ENCODE measurements at regions of chr4 and their contacts with region 1.

Region 1: GRCh38 chr4:26410385-26411293 is 79.6 kb downstream of the CCKAR start:
- ATAC-seq: peak in 6 of 8 experiments; percentile 51 to 75 (median 66)
- H3K4me3 ChIP-seq: no peak overlapping the region
- H3K27ac ChIP-seq: no peak overlapping the region
- H3K4me1 ChIP-seq: no peaks in the 10 kb centered on the region

Region 2: GRCh38 chr4:26028793-26029567 is 381.7 kb before region 1 on chr4:
- in situ Hi-C with region 1: loop called in 2 of 9 experiments (anchors 25 kb)
- ATAC-seq: peak; percentile 92 to 99 (median 98)
- H3K4me3 ChIP-seq: no peak overlapping the region
- H3K27ac ChIP-seq: no peak overlapping the region
- H3K4me1 ChIP-seq: peaks cover 17 to 29% of the 10 kb centered on the region in 2 donors

Region 3: GRCh38 chr4:26061248-26061986 is 349.2 kb before region 1 on chr4:
- in situ Hi-C with region 1: loop called in 1 of 9 experiments (anchors 25 kb)
- ATAC-seq: peak in 3 of 8 experiments; percentile 71 to 81 (median 75)
- H3K4me3 ChIP-seq: no peak overlapping the region
- H3K27ac ChIP-seq: no peak overlapping the region
- H3K4me1 ChIP-seq: no peaks in the 10 kb centered on the region

Measured in motor neuron (in vitro differentiated cells).